Ascending aorta (tissue), 2 donors: ENCODE measurements at regions of chr11 and their contacts with region 1.

Region 1: GRCh38 chr11:63738720-63739360 is 29.7 kb downstream of the ZFTA start:
- DNase-seq: peak in 1 of 2 donors; percentile 89
- H3K4me3 ChIP-seq: no peak overlapping the region
- H3K27ac ChIP-seq: peak overlapping the region; percentile 3 to 64
- H3K4me1 ChIP-seq: no peaks in the 10 kb centered on the region
- H3K27me3 ChIP-seq: no peaks in the 10 kb centered on the region
- CTCF ChIP-seq: peak; percentile 73 to 98 (median 96)

Region 2: GRCh38 chr11:63478896-63479295 is 259.9 kb before region 1 on chr11:
- intact Hi-C with region 1: loop called (anchors 2 kb)
- DNase-seq: peak in 1 of 2 donors; percentile 68
- H3K4me3 ChIP-seq: no peak overlapping the region
- H3K27ac ChIP-seq: no peak overlapping the region
- H3K4me1 ChIP-seq: peaks cover 0 to 5% of the 10 kb centered on the region in 2 donors
- H3K27me3 ChIP-seq: no peaks in the 10 kb centered on the region
- CTCF ChIP-seq: peak; percentile 80 to 89 (median 87)

Region 3: GRCh38 chr11:63635762-63636465 is 102.9 kb before region 1 on chr11:
- intact Hi-C with region 1: loop called (anchors 1 kb)
- DNase-seq: no peak
- H3K4me3 ChIP-seq: no peak overlapping the region
- H3K27ac ChIP-seq: no peak overlapping the region
- H3K4me1 ChIP-seq: no peaks in the 10 kb centered on the region
- H3K27me3 ChIP-seq: no peaks in the 10 kb centered on the region
- CTCF ChIP-seq: peak; percentile 54 to 74 (median 60)

Region 4: DNA sequence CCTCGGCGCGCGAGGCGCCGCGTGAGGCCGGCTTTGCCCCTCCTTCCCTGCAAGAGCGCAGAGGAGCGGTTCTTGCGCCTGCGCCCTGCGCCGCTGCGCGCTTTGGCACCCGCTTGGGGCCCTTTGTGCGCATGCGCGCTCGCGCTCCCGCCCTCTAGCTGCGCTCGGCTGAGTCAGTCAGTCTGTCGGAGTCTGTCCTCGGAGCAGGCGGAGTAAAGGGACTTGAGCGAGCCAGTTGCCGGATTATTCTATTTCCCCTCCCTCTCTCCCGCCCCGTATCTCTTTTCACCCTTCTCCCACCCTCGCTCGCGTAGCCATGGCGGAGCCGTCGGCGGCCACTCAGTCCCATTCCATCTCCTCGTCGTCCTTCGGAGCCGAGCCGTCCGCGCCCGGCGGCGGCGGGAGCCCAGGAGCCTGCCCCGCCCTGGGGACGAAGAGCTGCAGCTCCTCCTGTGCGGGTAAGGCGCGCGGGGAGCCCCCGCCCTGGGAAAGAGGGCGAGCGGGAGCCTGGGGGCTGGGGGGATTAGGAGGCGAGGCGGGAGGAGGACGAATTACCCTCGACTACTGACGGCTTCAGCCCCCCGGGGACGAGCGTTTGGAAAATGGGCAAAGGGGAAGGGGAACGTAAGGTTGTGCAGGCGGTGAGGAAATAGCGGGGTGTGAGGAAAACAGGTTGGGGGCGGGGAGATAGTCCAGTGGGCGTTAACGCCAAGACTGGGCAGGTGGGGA is 57.4 kb before region 1 on chr11 and contains the start of gene RTN3:
- intact Hi-C with region 1: loop called (anchors 2 kb)
- DNase-seq: peak; percentile 84 to 98
- H3K4me3 ChIP-seq: peak within 1 kb of the TSS; percentile 76 to 88
- H3K27ac ChIP-seq: peak within 1 kb of the TSS; percentile 91 to 96
- H3K4me1 ChIP-seq: peaks cover 0 to 3% of the 10 kb centered on the region in 2 donors
- H3K27me3 ChIP-seq: no peaks in the 10 kb centered on the region
- CTCF ChIP-seq: no peak
- total RNA-seq, gene RTN3: 49.5 TPM